AG04449 (cell line): ENCODE measurements at regions of chr6 and their contacts with region 1.

Region 1: DNA sequence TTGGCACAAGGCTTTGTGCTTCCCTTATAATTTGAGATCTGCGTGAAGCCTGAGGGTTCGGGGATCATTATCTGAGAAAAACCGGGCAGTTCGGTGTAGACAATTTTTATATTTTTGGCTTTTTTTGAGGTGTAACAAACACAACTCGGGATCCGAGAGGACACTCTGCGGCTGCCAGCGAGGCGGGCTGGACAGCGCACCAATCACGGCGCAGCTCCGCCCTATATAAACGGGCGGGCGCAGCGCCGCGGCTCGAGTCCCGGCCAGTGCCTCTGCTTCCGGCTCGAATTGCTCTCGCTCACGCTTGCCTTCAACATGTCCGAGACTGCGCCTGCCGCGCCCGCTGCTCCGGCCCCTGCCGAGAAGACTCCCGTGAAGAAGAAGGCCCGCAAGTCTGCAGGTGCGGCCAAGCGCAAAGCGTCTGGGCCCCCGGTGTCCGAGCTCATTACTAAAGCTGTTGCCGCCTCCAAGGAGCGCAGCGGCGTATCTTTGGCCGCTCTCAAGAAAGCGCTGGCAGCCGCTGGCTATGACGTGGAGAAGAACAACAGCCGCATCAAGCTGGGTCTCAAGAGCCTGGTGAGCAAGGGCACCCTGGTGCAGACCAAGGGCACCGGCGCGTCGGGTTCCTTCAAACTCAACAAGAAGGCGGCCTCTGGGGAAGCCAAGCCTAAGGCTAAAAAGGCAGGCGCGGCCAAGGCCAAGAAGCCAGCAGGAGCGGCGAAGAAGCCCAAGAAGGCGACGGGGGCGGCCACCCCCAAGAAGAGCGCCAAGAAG is 69.0 kb downstream of the HFE start:
- DNase-seq: peak; percentile 28
- H3K4me3 ChIP-seq: peak overlapping the region; percentile 68
- CTCF ChIP-seq: no peak

Region 2: DNA sequence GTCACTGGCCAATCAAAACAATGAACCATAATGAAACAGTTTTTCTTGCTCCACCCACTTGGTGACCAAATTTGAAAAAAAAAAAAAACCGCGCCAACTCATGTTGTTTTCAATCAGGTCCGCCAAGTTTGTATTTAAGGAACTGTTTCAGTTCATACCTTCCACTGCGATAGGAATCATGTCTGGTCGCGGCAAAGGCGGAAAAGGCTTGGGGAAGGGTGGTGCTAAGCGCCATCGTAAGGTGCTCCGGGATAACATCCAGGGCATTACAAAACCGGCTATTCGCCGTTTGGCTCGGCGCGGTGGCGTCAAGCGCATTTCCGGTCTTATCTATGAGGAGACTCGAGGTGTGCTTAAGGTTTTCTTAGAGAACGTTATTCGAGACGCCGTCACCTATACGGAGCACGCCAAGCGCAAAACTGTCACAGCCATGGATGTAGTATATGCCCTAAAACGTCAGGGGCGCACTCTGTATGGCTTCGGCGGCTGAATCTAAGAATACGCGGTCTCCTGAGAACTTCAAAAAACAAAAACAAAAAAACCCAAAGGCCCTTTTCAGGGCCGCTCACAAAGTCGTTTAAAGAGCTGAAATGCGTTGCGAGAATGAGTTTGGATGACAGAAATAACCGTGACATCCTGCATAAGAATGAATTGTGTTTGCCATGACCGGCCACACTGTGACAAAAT is 52.4 kb before region 1 on chr6:
- CTCF ChIA-PET with region 1: no interaction called
- POLR2A ChIA-PET with region 1: interaction called, 24 read pairs
- DNase-seq: peak; percentile 79
- H3K4me3 ChIP-seq: peak overlapping the region; percentile 65
- CTCF ChIP-seq: peak; percentile 41

Region 3: DNA sequence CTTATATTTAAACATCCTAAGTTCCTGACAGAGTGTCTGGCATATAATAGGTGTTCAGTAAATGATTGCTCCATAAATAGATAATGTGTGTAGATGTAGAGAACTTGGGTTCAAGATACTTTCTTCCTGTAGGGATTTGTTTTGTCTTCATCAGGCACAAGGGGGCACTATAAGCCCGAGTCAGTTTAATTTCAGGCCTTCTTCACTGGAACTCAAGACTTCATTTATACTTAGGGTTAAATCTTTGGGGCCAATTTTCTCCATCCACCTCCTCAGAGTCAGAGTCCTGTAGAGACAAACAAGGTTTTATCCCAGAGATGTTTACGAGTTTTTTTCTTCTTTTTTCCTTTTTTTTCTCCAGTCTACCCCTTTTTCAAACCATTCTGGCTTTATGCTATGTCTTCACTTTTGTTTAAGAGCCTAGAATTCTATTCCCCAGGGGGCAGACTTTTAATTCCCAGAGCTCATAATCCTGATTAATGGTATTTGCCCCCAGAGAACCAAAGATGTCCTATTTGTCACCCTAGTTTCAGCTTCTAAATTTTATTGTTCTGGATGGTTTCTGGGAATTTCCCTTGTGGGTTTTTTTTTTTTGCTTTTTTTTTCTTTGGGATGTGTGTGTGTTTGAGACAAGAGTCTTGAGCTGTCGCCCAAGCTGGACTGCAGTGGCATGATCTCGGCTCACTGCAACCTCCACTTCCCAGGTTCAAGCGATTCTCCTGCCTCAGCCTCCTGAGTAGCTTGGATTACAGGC is 19.3 kb after region 1 on chr6:
- CTCF ChIA-PET with region 1: interaction called, 12 read pairs
- POLR2A ChIA-PET with region 1: interaction called, 32 read pairs
- DNase-seq: no peak
- H3K4me3 ChIP-seq: no peak overlapping the region
- CTCF ChIP-seq: peak; percentile 40

Region 4: DNA sequence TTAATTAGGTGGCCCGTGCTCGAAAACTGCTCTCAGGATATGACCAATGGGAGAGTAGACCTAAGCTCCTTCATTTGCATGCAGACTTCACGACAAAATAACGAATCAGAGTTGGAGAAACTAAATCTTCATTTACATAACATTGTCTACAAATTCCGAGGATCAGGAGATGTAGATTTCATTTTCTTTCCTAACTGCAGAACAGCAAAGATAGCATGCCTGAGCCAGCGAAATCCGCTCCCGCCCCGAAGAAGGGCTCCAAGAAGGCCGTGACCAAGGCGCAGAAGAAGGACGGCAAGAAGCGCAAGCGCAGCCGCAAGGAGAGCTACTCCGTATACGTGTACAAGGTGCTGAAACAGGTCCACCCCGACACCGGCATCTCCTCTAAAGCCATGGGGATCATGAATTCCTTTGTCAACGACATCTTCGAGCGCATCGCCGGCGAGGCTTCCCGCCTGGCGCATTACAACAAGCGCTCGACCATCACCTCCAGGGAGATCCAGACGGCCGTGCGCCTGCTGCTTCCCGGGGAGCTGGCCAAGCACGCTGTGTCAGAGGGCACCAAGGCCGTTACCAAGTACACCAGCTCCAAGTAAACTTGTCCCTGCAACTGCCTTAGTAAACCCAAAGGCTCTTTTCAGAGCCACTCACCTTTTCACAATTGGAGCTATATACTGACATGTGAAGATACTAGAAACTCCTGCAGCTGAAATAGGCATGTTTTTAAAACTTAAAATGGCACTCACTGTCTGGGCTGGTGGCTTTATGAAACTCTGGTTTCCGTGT is 27.5 kb after region 1 on chr6:
- CTCF ChIA-PET with region 1: interaction called, 6 read pairs
- POLR2A ChIA-PET with region 1: interaction called, 33 read pairs
- DNase-seq: no peak
- H3K4me3 ChIP-seq: peak overlapping the region; percentile 57
- CTCF ChIP-seq: no peak

Region 5: DNA sequence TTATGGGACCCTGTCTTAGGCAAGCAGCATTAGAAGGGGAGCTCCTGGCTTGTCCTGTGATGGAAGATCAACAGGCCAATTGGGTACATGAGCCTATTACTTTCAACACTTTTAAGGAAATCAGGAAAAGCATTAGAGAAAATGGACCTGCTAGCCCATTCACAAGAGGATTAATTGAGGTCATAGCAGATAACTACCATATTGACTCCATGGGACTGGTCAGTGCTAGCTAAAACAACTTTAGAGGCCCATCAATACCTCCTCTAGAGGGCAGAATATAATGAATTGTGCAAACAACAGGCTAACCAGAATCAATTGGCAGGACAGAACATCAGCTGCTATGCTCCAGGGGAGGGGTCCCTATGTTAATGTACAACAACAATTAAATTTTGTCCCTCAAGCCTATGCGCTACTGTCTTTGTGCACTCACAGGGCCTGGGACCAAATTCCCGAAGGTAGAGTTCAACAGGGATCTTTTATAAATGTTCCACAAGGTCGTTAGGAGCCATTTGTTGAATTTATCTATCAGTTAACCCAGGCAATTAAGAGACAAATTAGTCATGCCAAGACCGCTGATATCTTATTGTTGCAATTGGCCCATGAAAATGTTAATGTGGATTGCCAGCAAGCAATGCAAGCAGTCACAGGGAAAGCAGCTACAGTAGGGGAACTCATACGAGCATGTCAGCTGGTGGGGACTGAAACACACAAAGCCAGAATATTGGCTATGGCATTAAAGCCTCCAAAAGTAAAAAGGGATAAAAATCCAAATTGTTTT is 102.1 kb after region 1 on chr6:
- CTCF ChIA-PET with region 1: no interaction called
- POLR2A ChIA-PET with region 1: no interaction called
- DNase-seq: no peak
- H3K4me3 ChIP-seq: no peak overlapping the region
- CTCF ChIP-seq: no peak

Region 6: GRCh38 chr6:26445934-26446667 is 289.8 kb after region 1 on chr6:
- CTCF ChIA-PET with region 1: no interaction called
- POLR2A ChIA-PET with region 1: no interaction called
- DNase-seq: no peak
- H3K4me3 ChIP-seq: no peak overlapping the region
- CTCF ChIP-seq: no peak